Naive thymus-derived CD4-positive, alpha-beta T cell (primary cell): ENCODE measurements at regions of chr16 and their contacts with region 1.

Region 1: GRCh38 chr16:88856828-88857733 is at the starts of genes GALNS and TRAPPC2L:
- DNase-seq: peak; percentile 95 to 100 (median 98)
- ATAC-seq: peak; percentile 95
- H3K4me3 ChIP-seq: peak within 1 kb of the TSS; percentile 98
- H3K4me3 Mint-ChIP-seq: peak within 1 kb of the TSS; percentile 94 to 100 (median 98)
- H3K27ac ChIP-seq: peak within 1 kb of the TSS; percentile 71
- H3K27ac Mint-ChIP-seq: peak within 1 kb of the TSS; percentile 88 to 100 (median 94)
- H3K4me1 ChIP-seq: peaks cover 20 to 25% of the 10 kb centered on the region in 2 donors
- H3K4me1 Mint-ChIP-seq: peaks cover 24 to 46% (median 41%) of the 10 kb centered on the region in 7 donors
- H3K27me3 ChIP-seq: no peaks in the 10 kb centered on the region
- H3K27me3 Mint-ChIP-seq: no peaks in the 10 kb centered on the region
- total RNA-seq, gene GALNS: 48.6 to 64.3 (median 57.5) TPM
- total RNA-seq, gene TRAPPC2L: 32.3 to 73.4 (median 60.1) TPM

Region 2: GRCh38 chr16:88662843-88663606 is 194.1 kb before region 1 on chr16 and contains the start of gene MVD:
- CTCF ChIA-PET with region 1: no interaction called
- POLR2A ChIA-PET with region 1: no interaction called
- intact Hi-C with region 1: loop called in 1 of 2 experiments (anchors 2 kb)
- DNase-seq: peak; percentile 88 to 96 (median 94)
- ATAC-seq: peak; percentile 99
- H3K4me3 ChIP-seq: peak within 1 kb of the TSS; percentile 89
- H3K4me3 Mint-ChIP-seq: peak within 1 kb of the TSS; percentile 91 to 96 (median 94)
- H3K27ac ChIP-seq: peak within 1 kb of the TSS; percentile 95
- H3K27ac Mint-ChIP-seq: peak within 1 kb of the TSS; percentile 56 to 95 (median 93)
- H3K4me1 ChIP-seq: peaks cover 8% of the 10 kb centered on the region in 2 donors
- H3K4me1 Mint-ChIP-seq: peaks cover 12 to 26% (median 19%) of the 10 kb centered on the region in 7 donors
- H3K27me3 ChIP-seq: no peaks in the 10 kb centered on the region
- H3K27me3 Mint-ChIP-seq: no peaks in the 10 kb centered on the region
- total RNA-seq, gene MVD: 37.7 to 66.9 (median 42.7) TPM

Region 3: DNA sequence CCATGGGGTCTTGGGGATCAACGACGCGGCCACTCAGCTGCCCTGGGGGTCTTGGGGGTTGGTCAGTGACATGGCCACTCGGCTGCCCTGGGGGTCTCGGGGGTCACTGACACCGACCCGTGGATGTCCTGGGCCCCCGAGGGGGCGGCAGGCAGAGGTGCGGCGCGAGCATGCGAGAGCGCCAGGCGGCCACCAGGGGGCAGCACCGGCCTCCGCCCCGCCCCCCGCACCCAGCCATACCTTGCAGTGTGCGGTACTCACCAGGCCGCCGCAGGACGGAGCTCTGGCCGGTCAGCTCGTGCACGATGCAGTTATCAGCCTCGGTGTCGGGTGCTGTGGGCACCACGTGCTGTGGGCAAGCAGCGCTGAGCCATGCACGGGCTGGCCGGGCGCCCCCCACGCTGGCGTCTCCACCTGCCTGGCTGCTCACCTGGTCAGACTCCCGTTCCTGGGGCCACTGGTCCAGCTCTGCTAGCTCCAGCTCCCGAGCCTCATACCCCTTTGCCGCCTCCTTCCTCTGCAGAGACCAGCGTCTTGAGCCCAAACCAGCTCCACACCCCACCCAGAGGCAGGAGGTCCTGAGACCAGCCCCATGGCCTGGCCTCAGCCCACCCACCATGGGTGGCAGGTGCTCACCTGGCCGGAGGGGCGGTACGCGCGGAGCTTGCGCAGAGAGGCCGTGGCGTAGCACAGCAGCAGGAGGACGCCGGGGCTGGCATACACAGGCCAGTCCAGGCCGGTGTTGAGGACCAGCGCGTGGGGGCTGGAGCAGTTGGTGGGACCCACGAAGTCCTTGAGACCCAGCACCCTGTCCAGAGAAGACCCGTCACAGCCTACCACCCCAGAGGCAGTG is 119.6 kb before region 1 on chr16:
- CTCF ChIA-PET with region 1: interaction called, 9 read pairs
- POLR2A ChIA-PET with region 1: interaction called, 15 read pairs
- intact Hi-C with region 1: loop called in 1 of 2 experiments (anchors 1 kb)
- DNase-seq: peak; percentile 55 to 81 (median 65)
- ATAC-seq: peak; percentile 95
- H3K4me3 ChIP-seq: no peak overlapping the region
- H3K4me3 Mint-ChIP-seq: peak overlapping the region in 1 of 10 donors; percentile 34
- H3K27ac ChIP-seq: no peak overlapping the region
- H3K27ac Mint-ChIP-seq: no peak overlapping the region
- H3K4me1 ChIP-seq: peaks cover 3 to 5% of the 10 kb centered on the region in 2 donors
- H3K4me1 Mint-ChIP-seq: peaks cover 0 to 8% (median 0%) of the 10 kb centered on the region in 7 donors
- H3K27me3 ChIP-seq: no peaks in the 10 kb centered on the region
- H3K27me3 Mint-ChIP-seq: no peaks in the 10 kb centered on the region

Region 4: DNA sequence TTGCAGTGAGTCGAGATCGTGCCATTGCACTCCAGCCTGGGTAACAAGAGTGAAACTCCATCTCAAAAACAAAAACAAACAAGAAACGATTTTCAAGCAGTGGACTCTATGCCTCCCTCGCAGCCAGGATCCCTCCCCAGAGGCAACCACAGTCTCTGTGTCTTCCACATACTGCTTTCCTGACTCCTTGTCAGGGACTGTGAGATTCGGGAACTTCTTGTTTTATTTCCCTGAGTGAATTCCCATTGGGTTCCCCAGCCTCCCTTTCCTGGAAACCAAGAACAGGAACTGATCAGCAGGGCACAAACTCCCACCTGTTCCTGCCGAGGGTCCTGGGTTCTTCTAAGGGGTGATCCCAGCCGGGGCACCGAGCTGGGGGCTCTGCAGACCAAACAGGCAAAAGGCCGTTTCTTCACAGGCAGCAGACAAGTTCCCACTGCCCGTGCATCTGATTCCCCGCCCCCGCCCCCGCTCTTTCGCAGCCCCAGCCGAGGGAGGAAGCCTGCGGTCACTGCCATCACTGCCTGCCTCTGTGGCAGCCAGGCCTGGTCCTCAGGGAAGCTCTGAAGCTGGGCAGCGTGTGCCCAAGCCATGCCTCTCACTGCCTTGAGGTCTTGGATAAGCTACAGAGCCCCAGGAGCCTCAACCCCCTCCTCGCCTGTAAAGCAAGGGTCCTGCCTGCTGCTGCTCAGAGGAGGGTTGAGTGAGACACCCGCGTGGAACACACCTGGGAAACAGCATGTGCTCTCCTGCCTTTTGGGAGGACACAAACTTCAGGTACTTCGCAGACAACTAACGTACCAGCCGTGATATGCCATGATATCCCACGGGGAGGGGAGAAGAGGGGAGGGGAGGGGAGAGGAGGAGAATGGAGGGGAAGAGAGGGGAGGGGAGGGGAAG is 66.5 kb before region 1 on chr16:
- CTCF ChIA-PET with region 1: interaction called, 10 read pairs
- POLR2A ChIA-PET with region 1: interaction called, 14 read pairs
- intact Hi-C with region 1: loop called (anchors 1 to 2 kb)
- DNase-seq: peak in 7 of 9 donors; percentile 46 to 60 (median 49)
- ATAC-seq: peak; percentile 78
- H3K4me3 ChIP-seq: peak overlapping the region; percentile 48
- H3K4me3 Mint-ChIP-seq: peak overlapping the region; percentile 48 to 80 (median 72)
- H3K27ac ChIP-seq: peak overlapping the region; percentile 60
- H3K27ac Mint-ChIP-seq: peak overlapping the region; percentile 10 to 95 (median 87)
- H3K4me1 ChIP-seq: peaks cover 34 to 58% of the 10 kb centered on the region in 2 donors
- H3K4me1 Mint-ChIP-seq: peaks cover 19 to 59% (median 49%) of the 10 kb centered on the region in 7 donors
- H3K27me3 ChIP-seq: no peaks in the 10 kb centered on the region
- H3K27me3 Mint-ChIP-seq: no peaks in the 10 kb centered on the region

Region 5: DNA sequence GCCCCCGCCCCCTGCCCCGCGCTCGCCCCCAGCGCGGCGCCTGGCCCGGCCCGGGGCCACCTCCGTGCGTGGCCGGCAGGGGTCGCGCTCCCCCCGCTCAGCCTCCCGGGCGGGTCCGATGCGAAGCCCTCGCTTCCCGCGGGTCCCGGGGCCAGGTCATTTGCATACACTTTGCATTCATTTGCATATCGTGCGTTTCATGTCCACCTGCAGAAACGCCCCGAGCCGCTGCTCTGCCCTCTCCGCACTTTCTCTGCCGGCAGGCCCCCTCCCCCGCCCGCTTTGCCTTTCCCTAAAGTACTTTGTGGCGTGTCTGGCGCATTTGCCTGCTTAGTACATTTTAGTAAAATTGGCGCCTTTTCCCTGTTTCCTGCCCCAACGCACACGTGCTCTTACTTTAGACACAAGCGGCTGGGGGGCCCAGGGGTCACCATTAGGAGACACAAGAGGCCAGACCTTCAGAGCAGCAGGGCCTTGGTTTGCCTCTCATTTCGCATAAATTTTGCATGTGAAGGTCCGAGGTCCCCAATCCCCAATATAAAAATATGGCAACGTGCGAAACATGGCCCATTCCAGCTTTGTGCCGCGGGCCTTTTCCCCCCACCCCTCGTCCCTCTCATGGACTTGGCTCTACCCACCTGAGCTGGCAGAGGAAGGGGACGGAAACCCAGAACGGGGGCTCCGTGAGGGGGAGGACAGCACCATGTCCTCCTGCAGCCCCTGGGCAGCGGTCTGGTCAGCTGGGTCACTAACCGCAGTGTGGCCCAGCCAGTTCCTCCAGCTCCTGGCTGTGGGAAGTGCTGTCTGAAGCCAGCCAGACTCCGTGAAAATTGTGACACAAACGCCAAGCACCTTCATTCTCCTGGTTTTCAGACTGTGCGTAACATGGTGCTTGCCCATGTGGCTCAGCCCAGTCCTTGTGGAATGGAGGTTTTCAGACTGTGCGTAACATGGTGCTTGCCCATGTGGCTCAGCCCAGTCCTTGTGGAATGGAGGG is 85.1 kb after region 1 on chr16:
- CTCF ChIA-PET with region 1: no interaction called
- POLR2A ChIA-PET with region 1: no interaction called
- intact Hi-C with region 1: loop called in 1 of 2 experiments (anchors 5 kb)
- DNase-seq: peak; percentile 21 to 67 (median 51)
- ATAC-seq: peak; percentile 76
- H3K4me3 ChIP-seq: no peak overlapping the region
- H3K4me3 Mint-ChIP-seq: peak overlapping the region; percentile 27 to 84 (median 52)
- H3K27ac ChIP-seq: no peak overlapping the region
- H3K27ac Mint-ChIP-seq: peak overlapping the region in 2 of 9 donors; percentile 1 to 41
- H3K4me1 ChIP-seq: peaks cover 3 to 6% of the 10 kb centered on the region in 2 donors
- H3K4me1 Mint-ChIP-seq: peaks cover 0 to 19% (median 5%) of the 10 kb centered on the region in 7 donors
- H3K27me3 ChIP-seq: peaks cover 0 to 15% of the 10 kb centered on the region in 2 donors
- H3K27me3 Mint-ChIP-seq: peaks cover 17 to 44% (median 25%) of the 10 kb centered on the region in 5 donors

Region 6: DNA sequence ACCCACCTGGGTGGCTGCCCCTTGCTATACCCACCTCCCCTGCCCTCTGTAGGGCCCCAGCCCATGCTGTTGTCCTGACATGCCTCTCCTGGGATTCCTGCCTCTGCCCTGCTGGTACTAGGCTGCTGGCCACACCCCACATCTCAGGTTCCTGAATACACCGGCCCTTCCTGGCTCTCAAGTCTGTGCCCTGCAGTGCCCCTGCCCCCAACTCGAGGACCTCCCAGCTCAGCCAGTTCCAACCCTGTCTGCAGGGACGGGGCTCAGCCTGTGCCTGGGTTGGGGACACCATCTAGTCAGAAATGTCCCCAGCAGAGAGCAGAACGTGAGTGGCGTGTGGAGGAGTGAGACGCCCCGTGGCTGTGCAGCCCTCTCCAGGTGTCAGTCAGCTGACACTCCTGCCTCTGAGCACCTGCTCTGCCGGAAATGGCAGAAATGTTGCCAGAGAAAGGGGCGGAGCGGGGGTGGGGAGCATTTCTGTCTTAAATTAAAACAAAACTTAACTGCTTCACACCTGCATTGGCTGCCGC is 265.3 kb after region 1 on chr16:
- CTCF ChIA-PET with region 1: no interaction called
- POLR2A ChIA-PET with region 1: interaction called, 3 read pairs
- intact Hi-C with region 1: loop called in 1 of 2 experiments (anchors 2 kb)
- DNase-seq: peak in 8 of 9 donors; percentile 42 to 91 (median 88)
- ATAC-seq: peak; percentile 94
- H3K4me3 ChIP-seq: peak overlapping the region; percentile 55
- H3K4me3 Mint-ChIP-seq: peak overlapping the region in 9 of 10 donors; percentile 65 to 78 (median 72)
- H3K27ac ChIP-seq: peak overlapping the region; percentile 66
- H3K27ac Mint-ChIP-seq: peak overlapping the region; percentile 55 to 99 (median 94)
- H3K4me1 ChIP-seq: peaks cover 3 to 30% of the 10 kb centered on the region in 2 donors
- H3K4me1 Mint-ChIP-seq: peaks cover 11 to 76% (median 46%) of the 10 kb centered on the region in 7 donors
- H3K27me3 ChIP-seq: no peaks in the 10 kb centered on the region
- H3K27me3 Mint-ChIP-seq: no peaks in the 10 kb centered on the region

Region 7: DNA sequence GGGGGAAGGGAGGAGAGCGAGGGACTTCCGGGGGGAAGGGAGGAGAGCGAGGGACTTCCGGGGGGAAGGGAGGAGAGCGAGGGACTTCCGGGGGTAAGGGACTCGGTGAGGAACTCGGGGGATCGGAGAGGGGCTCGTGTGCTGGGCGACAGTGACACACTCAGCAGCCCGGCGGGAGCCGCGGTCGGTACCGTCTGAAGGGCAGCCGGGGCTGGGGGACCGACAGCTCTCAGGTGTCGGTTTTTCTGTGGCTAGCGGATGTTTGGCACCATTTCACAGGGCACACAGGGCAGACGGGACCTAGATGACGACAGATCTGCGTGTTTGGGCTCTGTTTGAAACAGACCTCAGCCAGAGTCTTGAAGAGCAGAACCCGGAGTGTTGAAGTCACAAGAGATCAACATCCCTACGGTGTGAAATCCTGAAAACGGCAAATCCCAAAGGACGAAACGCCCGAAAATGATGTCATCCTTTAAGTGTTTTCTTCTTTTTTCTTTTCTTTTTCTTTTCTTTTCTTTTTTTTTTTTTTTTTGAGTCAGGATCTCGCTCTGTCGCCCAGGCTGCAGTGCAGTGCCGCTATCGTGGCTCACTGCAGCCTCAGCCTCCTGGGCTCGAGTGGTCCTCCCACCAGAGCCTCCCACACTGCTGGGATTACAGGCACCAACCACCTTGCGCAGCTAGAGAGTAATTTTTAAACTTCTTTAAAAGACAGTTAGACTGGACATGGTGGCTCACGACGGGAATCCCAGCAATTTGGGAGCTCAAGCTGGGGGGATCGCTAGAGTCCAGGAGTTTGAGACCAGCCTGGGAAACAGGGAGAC is 384.3 kb after region 1 on chr16:
- CTCF ChIA-PET with region 1: no interaction called
- POLR2A ChIA-PET with region 1: interaction called, 7 read pairs
- intact Hi-C with region 1: loop called in 1 of 2 experiments (anchors 10 kb)
- DNase-seq: peak; percentile 75 to 95 (median 93)
- ATAC-seq: peak; percentile 86
- H3K4me3 ChIP-seq: peak overlapping the region; percentile 68
- H3K4me3 Mint-ChIP-seq: peak overlapping the region; percentile 83 to 100 (median 96)
- H3K27ac ChIP-seq: peak overlapping the region; percentile 91
- H3K27ac Mint-ChIP-seq: peak overlapping the region; percentile 94 to 100 (median 99)
- H3K4me1 ChIP-seq: peaks cover 5 to 6% of the 10 kb centered on the region in 2 donors
- H3K4me1 Mint-ChIP-seq: peaks cover 0 to 31% (median 18%) of the 10 kb centered on the region in 7 donors
- H3K27me3 ChIP-seq: no peaks in the 10 kb centered on the region
- H3K27me3 Mint-ChIP-seq: no peaks in the 10 kb centered on the region